Activated CD4-positive, alpha-beta memory T cell treated with anti-CD3 and anti-CD28 coated beads for 36 hours (primary cell): ENCODE measurements at regions of chr5 and their contacts with region 1.

Region 1: GRCh38 chr5:67003935-67004729 is 192.5 kb downstream of the CD180 start:
- DNase-seq: peak; percentile 95
- H3K4me3 Mint-ChIP-seq: peak overlapping the region; percentile 92
- H3K27ac Mint-ChIP-seq: peak overlapping the region; percentile 95
- H3K4me1 Mint-ChIP-seq: peaks cover 58% of the 10 kb centered on the region
- H3K27me3 Mint-ChIP-seq: no peaks in the 10 kb centered on the region

Region 2: GRCh38 chr5:66378407-66378806 is 625.7 kb before region 1 on chr5:
- CTCF ChIA-PET with region 1: no interaction called
- POLR2A ChIA-PET with region 1: no interaction called
- intact Hi-C with region 1: no loop called
- DNase-seq: no peak
- H3K4me3 Mint-ChIP-seq: no peak overlapping the region
- H3K27ac Mint-ChIP-seq: no peak overlapping the region
- H3K4me1 Mint-ChIP-seq: no peaks in the 10 kb centered on the region
- H3K27me3 Mint-ChIP-seq: peaks cover 8% of the 10 kb centered on the region

Region 3: DNA sequence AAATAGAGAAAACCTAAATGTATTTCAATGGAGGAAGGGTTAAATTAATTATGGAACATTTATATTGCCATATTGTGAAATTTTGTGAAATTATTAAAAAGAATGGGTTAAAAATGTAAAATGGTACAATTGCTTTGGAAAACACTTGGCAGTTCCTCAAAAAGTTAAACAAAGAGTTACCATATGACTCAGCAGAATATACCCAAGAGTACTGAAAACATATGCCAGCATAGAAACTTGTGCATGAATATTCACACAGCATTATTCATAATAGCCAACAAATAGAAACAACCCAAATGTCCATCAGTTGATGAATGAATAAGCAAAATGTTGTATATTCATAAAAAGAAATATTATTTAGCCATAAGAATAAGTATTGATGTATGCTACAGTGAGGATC is 588.9 kb before region 1 on chr5:
- CTCF ChIA-PET with region 1: no interaction called
- POLR2A ChIA-PET with region 1: no interaction called
- intact Hi-C with region 1: no loop called
- DNase-seq: no peak
- H3K4me3 Mint-ChIP-seq: no peak overlapping the region
- H3K27ac Mint-ChIP-seq: no peak overlapping the region
- H3K4me1 Mint-ChIP-seq: no peaks in the 10 kb centered on the region
- H3K27me3 Mint-ChIP-seq: peaks cover 3% of the 10 kb centered on the region

Region 4: DNA sequence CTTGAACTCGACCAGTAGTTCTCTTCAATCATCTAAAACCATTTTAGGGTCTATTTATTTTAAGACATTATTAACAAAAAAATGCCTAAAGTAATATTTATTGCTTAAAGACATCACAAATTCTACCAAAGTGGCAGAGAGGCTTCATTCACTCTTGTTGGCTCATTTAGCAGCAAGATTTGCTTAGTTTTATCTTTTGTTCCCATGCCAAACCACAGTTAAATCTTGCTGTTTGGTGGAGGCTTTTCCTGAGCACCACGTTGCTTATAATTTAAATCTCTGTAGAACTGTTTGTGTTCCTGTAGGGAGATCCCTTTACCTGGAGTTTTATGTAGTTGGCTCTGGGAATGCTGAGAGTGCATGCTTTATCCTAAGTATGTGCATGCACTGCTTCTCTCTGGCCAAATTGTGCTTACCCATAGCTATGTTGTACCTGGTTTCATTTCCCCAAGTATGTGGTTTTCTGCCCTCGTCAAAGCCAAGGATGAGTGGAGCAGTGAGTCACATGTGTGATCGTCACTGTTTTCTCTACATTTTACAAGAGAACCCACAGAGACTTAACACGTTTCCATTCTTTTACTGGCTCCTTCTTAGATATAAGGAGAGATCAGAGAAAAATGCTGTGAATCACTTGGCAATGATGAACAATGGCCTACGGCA is 450.1 kb before region 1 on chr5:
- CTCF ChIA-PET with region 1: no interaction called
- POLR2A ChIA-PET with region 1: no interaction called
- intact Hi-C with region 1: loop called (anchors 10 kb)
- DNase-seq: peak; percentile 62
- H3K4me3 Mint-ChIP-seq: no peak overlapping the region
- H3K27ac Mint-ChIP-seq: peak overlapping the region; percentile 44
- H3K4me1 Mint-ChIP-seq: peaks cover 19% of the 10 kb centered on the region
- H3K27me3 Mint-ChIP-seq: peaks cover 8% of the 10 kb centered on the region

Region 5: DNA sequence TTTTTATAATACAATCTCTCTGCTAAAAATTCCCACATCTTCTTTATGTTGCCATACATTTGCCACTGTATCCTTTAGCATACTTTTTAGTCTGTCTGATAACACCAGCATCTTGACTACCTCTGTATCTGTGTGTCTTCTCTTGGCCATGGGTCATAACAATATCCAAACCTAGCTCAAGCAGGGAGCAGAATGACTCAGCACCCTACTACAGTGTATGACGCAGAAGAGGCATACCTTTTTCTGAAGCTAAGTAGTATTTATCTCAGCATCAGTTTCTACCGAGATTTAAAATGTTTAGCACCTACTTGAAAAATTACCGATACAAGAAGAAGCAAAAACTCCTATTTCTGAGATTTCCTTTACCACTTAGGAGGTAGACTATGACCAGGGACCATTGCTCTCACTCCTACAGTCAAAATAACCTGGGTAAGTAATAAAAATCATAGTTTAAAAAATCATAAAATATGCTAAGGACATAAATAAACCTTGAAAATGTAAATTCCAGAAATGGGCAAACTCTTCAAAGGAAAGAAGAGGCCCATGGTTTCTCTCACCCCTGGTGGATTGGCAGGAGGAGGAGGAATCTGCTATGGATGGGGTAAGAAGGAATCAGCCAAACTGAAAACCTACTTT is 121.4 kb before region 1 on chr5:
- CTCF ChIA-PET with region 1: no interaction called
- POLR2A ChIA-PET with region 1: no interaction called
- intact Hi-C with region 1: loop called (anchors 5 kb)
- DNase-seq: peak; percentile 59
- H3K4me3 Mint-ChIP-seq: no peak overlapping the region
- H3K27ac Mint-ChIP-seq: no peak overlapping the region
- H3K4me1 Mint-ChIP-seq: peaks cover 11% of the 10 kb centered on the region
- H3K27me3 Mint-ChIP-seq: peaks cover 19% of the 10 kb centered on the region

Region 6: GRCh38 chr5:67032921-67033664 is 29.0 kb after region 1 on chr5:
- CTCF ChIA-PET with region 1: no interaction called
- POLR2A ChIA-PET with region 1: interaction called, 3 read pairs
- intact Hi-C with region 1: loop called (anchors 1 kb)
- DNase-seq: no peak
- H3K4me3 Mint-ChIP-seq: no peak overlapping the region
- H3K27ac Mint-ChIP-seq: no peak overlapping the region
- H3K4me1 Mint-ChIP-seq: peaks cover 67% of the 10 kb centered on the region
- H3K27me3 Mint-ChIP-seq: no peaks in the 10 kb centered on the region

Region 7: DNA sequence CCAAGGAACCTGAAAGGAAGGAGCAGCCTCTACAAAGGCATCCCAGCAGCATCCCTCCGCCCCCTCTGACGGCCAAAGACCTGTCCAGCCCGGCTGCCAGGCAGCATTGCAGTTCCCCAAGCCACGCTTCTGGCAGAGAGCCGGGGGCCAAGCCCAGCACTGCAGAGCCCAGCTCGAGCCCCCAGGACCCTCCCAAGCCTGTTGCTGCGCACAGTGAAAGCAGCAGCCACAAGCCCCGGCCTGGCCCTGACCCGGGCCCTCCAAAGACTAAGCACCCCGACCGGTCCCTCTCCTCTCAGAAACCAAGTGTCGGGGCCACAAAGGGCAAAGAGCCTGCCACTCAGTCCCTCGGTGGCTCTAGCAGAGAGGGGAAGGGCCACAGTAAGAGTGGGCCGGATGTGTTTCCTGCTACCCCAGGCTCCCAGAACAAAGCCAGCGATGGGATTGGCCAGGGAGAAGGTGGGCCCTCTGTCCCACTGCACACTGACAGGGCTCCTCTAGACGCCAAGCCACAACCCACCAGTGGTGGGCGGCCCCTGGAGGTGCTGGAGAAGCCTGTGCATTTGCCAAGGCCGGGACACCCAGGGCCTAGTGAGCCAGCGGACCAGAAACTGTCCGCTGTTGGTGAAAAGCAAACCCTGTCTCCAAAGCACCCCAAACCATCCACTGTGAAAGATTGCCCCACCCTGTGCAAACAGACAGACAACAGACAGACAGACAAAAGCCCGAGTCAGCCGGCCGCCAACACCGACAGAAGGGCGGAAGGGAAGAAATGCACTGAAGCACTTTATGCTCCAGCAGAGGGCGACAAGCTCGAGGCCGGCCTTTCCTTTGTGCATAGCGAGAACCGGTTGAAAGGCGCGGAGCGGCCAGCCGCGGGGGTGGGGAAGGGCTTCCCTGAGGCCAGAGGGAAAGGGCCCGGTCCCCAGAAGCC is 161.7 kb after region 1 on chr5:
- CTCF ChIA-PET with region 1: no interaction called
- POLR2A ChIA-PET with region 1: interaction called, 3 read pairs
- intact Hi-C with region 1: loop called (anchors 2 kb)
- DNase-seq: peak; percentile 89
- H3K4me3 Mint-ChIP-seq: peak overlapping the region; percentile 91
- H3K27ac Mint-ChIP-seq: peak overlapping the region; percentile 98
- H3K4me1 Mint-ChIP-seq: peaks cover 70% of the 10 kb centered on the region
- H3K27me3 Mint-ChIP-seq: no peaks in the 10 kb centered on the region

Region 8: DNA sequence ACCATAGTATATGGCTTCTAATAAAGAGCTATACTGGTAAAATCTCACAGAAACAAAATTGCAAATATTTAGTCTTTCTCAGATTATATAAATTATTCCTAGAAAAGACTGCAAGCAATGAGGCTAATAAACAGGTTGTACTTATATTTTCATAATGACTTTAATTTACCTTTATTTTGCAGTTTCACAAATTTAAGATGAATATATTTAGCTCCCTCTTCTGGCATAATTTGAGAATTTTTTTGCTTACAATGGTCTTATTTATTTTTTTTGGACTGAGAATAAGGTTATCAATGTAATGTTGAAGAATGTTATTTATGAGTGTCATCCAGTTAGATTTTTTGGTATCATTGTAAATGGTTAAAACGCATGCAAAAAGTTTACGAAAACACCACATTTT is 1268.2 kb after region 1 on chr5:
- CTCF ChIA-PET with region 1: no interaction called
- POLR2A ChIA-PET with region 1: no interaction called
- intact Hi-C with region 1: loop called (anchors 10 kb)
- DNase-seq: no peak
- H3K4me3 Mint-ChIP-seq: no peak overlapping the region
- H3K27ac Mint-ChIP-seq: no peak overlapping the region
- H3K4me1 Mint-ChIP-seq: peaks cover 89% of the 10 kb centered on the region
- H3K27me3 Mint-ChIP-seq: no peaks in the 10 kb centered on the region